ENCODE measurements at regions of chr20 and their contacts with region 1.

Region 1: DNA sequence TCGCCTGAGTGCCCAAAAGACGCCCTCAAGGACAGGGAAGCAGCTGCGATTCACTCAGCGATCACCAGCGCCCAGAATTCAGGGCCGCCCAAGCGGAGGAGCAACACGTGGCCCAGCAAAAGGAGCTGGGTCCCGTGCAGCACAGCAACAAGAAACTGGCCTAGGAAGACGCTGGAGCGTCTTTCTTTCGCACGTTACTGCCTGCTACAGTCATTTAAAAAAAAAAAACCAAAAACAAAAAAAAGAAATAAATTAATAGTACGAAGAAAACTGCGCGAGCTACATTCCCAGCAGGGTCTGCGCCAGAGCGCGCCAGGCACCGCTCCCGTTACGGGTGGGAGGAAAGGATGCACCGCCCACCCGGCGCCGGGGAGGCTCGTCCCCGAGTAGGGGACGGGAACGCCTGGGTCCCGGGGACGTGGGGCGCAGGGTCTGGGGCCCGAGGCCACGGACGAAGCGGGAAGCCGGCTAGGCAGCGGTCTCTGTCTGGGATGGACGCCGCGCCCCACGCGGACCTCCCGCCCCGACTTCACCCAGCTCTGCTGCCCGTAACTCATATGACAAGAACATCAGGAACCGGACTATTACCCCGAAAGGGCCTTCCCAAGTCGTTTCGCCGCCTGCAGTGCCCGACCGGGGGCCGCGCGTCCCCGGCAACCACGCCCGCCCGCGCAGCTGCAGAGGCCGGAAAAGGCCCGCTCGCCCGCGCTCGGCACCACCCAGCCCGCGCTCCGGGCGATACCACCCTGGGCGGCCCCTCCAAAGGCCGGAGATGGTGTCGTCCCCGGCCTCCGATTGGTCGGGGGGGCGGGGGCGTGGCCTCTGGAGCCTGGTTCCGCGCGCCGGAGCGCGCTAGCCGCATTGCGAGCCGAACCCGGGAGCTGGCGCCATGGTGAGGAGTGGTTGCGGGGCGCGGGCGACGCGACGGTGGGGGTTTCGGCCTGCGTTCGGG is at the start of gene NOP56:
- DNase-seq: peak; percentile 91 to 98 (median 95)
- ATAC-seq: peak; percentile 92
- H3K4me3 ChIP-seq: peak within 1 kb of the TSS; percentile 52 to 85
- H3K4me3 Mint-ChIP-seq: peak within 1 kb of the TSS; percentile 88
- H3K27ac ChIP-seq: peak within 1 kb of the TSS; percentile 77 to 86
- H3K27ac Mint-ChIP-seq: peak within 1 kb of the TSS; percentile 87
- H3K4me1 ChIP-seq: peaks cover 20% of the 10 kb centered on the region
- H3K4me1 Mint-ChIP-seq: peaks cover 44% of the 10 kb centered on the region
- H3K27me3 ChIP-seq: no peaks in the 10 kb centered on the region
- H3K27me3 Mint-ChIP-seq: no peaks in the 10 kb centered on the region
- CTCF ChIP-seq: no peak
- total RNA-seq, gene NOP56: 311 to 317 TPM

Region 2: GRCh38 chr20:844473-845225 is 1807.4 kb before region 1 on chr20:
- CTCF ChIA-PET with region 1: no interaction called
- POLR2A ChIA-PET with region 1: no interaction called
- intact Hi-C with region 1: loop called in 1 of 2 experiments (anchors 10 kb)
- DNase-seq: peak; percentile 81 to 97 (median 90)
- ATAC-seq: peak; percentile 94
- H3K4me3 ChIP-seq: peak overlapping the region; percentile 65 to 71
- H3K4me3 Mint-ChIP-seq: peak overlapping the region; percentile 94
- H3K27ac ChIP-seq: peak overlapping the region; percentile 26 to 48
- H3K27ac Mint-ChIP-seq: peak overlapping the region; percentile 84
- H3K4me1 ChIP-seq: peaks cover 52% of the 10 kb centered on the region
- H3K4me1 Mint-ChIP-seq: peaks cover 54% of the 10 kb centered on the region
- H3K27me3 ChIP-seq: no peaks in the 10 kb centered on the region
- H3K27me3 Mint-ChIP-seq: no peaks in the 10 kb centered on the region
- CTCF ChIP-seq: no peak

Region 3: GRCh38 chr20:2010533-2010932 is 641.5 kb before region 1 on chr20:
- CTCF ChIA-PET with region 1: no interaction called
- POLR2A ChIA-PET with region 1: no interaction called
- intact Hi-C with region 1: no loop called
- DNase-seq: no peak
- ATAC-seq: no peak
- H3K4me3 ChIP-seq: no peak overlapping the region
- H3K4me3 Mint-ChIP-seq: no peak overlapping the region
- H3K27ac ChIP-seq: no peak overlapping the region
- H3K27ac Mint-ChIP-seq: no peak overlapping the region
- H3K4me1 ChIP-seq: no peaks in the 10 kb centered on the region
- H3K4me1 Mint-ChIP-seq: no peaks in the 10 kb centered on the region
- H3K27me3 ChIP-seq: peaks cover 4% of the 10 kb centered on the region in 2 experiments
- H3K27me3 Mint-ChIP-seq: peaks cover 43% of the 10 kb centered on the region
- CTCF ChIP-seq: no peak

Region 4: GRCh38 chr20:2508631-2509467 is 143.2 kb before region 1 on chr20 and contains the start of gene ZNF343:
- CTCF ChIA-PET with region 1: no interaction called
- POLR2A ChIA-PET with region 1: interaction called, 3 read pairs
- intact Hi-C with region 1: loop called (anchors 1 to 5 kb)
- DNase-seq: peak; percentile 52 to 89 (median 75)
- ATAC-seq: peak; percentile 93
- H3K4me3 ChIP-seq: peak within 1 kb of the TSS; percentile 85 to 95
- H3K4me3 Mint-ChIP-seq: peak within 1 kb of the TSS; percentile 96
- H3K27ac ChIP-seq: peak within 1 kb of the TSS; percentile 30 to 80
- H3K27ac Mint-ChIP-seq: peak within 1 kb of the TSS; percentile 94
- H3K4me1 ChIP-seq: peaks cover 13% of the 10 kb centered on the region
- H3K4me1 Mint-ChIP-seq: peaks cover 29% of the 10 kb centered on the region
- H3K27me3 ChIP-seq: no peaks in the 10 kb centered on the region
- H3K27me3 Mint-ChIP-seq: peaks cover 8% of the 10 kb centered on the region
- CTCF ChIP-seq: no peak
- total RNA-seq, gene ZNF343: 3.9 to 4.9 TPM

Region 5: GRCh38 chr20:2663887-2664719 is 12.1 kb after region 1 on chr20 and contains the start of gene IDH3B:
- CTCF ChIA-PET with region 1: interaction called, 8 read pairs
- POLR2A ChIA-PET with region 1: interaction called, 68 read pairs
- intact Hi-C with region 1: loop called (anchors 1 kb)
- DNase-seq: peak; percentile 80 to 95 (median 93)
- ATAC-seq: peak; percentile 98
- H3K4me3 ChIP-seq: peak within 1 kb of the TSS; percentile 74 to 83
- H3K4me3 Mint-ChIP-seq: peak within 1 kb of the TSS; percentile 94
- H3K27ac ChIP-seq: peak within 1 kb of the TSS; percentile 82 to 95
- H3K27ac Mint-ChIP-seq: peak within 1 kb of the TSS; percentile 97
- H3K4me1 ChIP-seq: peaks cover 12% of the 10 kb centered on the region
- H3K4me1 Mint-ChIP-seq: peaks cover 20% of the 10 kb centered on the region
- H3K27me3 ChIP-seq: no peaks in the 10 kb centered on the region
- H3K27me3 Mint-ChIP-seq: peaks cover 7% of the 10 kb centered on the region
- CTCF ChIP-seq: no peak
- total RNA-seq, gene IDH3B: 174 to 184 TPM

Region 6: GRCh38 chr20:3045816-3046676 is 394.0 kb after region 1 on chr20 and contains the start of gene MRPS26:
- CTCF ChIA-PET with region 1: no interaction called
- POLR2A ChIA-PET with region 1: no interaction called
- intact Hi-C with region 1: loop called in 1 of 2 experiments (anchors 10 kb)
- DNase-seq: peak; percentile 48 to 87 (median 76)
- ATAC-seq: peak; percentile 85
- H3K4me3 ChIP-seq: peak within 1 kb of the TSS; percentile 72 to 95
- H3K4me3 Mint-ChIP-seq: peak within 1 kb of the TSS; percentile 82
- H3K27ac ChIP-seq: peak within 1 kb of the TSS; percentile 66 to 71
- H3K27ac Mint-ChIP-seq: peak within 1 kb of the TSS; percentile 76
- H3K4me1 ChIP-seq: peaks cover 15% of the 10 kb centered on the region
- H3K4me1 Mint-ChIP-seq: peaks cover 19% of the 10 kb centered on the region
- H3K27me3 ChIP-seq: no peaks in the 10 kb centered on the region
- H3K27me3 Mint-ChIP-seq: no peaks in the 10 kb centered on the region
- CTCF ChIP-seq: no peak
- total RNA-seq, gene MRPS26: 16.5 to 19.5 TPM

Region 7: DNA sequence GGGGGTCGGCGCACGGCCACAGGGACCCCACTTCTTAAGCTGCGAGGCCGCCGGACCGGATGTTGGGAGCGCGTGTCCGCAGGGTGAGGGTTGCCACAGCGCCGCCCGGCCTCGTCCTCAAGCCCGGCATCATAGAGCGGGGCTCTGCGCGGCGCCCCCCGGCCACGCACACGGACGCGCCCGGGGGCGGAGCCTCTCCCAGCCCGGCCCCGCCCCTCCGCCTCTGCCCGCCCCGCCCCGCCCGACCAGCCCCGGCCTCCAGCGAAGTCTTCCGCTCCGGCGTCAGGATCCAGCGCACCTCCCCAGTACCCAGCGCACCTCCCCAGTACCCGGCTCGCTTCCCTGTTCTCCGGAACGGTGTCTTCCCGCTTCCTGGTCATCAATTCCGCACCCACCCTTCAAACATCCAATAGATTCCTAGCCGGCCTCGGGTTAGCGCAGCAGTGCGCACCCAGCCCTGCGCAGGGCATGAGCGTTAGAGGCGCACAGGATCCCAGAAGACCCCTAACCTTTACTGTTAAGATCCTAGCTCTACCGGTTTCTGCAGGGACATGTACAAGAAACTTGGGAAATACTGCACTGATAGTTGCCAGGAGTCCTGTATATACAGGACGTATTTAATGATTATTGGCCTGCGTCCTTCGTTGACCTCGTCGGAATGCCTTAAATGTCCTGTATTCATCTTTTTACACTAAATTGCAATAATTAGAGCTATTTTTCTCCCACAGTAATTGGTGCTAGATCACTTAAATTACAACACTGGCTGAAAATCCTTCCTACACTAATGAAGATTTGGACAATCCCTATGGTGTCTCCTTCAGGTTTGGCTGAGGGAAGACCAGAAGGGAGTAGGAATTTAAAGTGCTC is 756.0 kb after region 1 on chr20:
- CTCF ChIA-PET with region 1: no interaction called
- POLR2A ChIA-PET with region 1: interaction called, 3 read pairs
- intact Hi-C with region 1: loop called in 1 of 2 experiments (anchors 5 kb)
- DNase-seq: peak; percentile 40 to 87 (median 69)
- ATAC-seq: peak; percentile 67
- H3K4me3 ChIP-seq: peak overlapping the region; percentile 74 to 86
- H3K4me3 Mint-ChIP-seq: peak overlapping the region; percentile 99
- H3K27ac ChIP-seq: peak overlapping the region; percentile 53 to 59
- H3K27ac Mint-ChIP-seq: peak overlapping the region; percentile 94
- H3K4me1 ChIP-seq: peaks cover 6% of the 10 kb centered on the region
- H3K4me1 Mint-ChIP-seq: peaks cover 25% of the 10 kb centered on the region
- H3K27me3 ChIP-seq: peaks cover 0 to 1% of the 10 kb centered on the region in 2 experiments
- H3K27me3 Mint-ChIP-seq: no peaks in the 10 kb centered on the region
- CTCF ChIP-seq: no peak

Region 8: DNA sequence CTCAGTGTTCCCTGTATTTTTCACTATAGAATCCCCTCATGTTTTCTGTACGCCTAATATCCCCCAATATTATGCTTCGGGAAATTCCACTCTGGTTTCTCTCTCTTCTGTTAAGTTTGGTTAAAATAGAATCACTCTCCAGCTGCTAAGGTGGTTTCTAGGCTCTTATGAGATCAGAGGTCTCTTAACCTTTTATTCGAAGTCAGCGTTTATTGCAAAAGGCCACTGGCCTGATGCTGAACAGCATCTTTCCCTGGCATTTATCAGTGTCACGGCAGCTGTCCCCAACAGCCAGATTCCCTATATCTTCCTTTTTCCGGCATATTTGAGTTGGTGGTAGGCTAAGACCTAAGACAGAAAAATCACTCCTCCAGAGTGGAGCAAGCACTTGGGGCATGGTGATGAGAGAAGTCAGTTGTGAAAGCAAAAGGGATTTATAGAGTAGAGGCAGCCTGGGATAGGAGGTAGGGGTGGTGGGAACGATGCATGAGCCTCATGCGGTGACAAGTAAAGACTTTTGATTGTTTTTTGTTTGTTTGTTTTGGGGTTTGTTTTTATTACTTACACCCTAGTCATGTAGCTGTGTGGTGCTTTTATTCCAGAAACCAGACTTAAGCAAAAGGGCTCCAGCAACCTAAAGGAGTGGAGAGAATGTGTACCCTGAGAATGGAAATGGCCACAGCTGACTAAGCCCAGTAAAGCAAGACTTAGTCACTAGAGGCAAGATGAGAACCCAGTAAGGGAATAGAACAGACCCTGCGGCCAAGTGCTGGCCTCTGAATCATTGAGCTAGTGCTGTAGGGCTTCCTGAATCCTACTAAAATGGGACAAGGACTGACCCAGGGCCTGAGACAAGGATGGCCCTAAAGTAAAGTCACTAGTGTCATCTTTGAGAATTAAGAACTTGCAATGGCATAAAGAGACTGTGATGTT is 1836.6 kb after region 1 on chr20:
- CTCF ChIA-PET with region 1: no interaction called
- POLR2A ChIA-PET with region 1: no interaction called
- intact Hi-C with region 1: no loop called
- DNase-seq: no peak
- ATAC-seq: no peak
- H3K4me3 ChIP-seq: no peak overlapping the region
- H3K4me3 Mint-ChIP-seq: no peak overlapping the region
- H3K27ac ChIP-seq: no peak overlapping the region
- H3K27ac Mint-ChIP-seq: no peak overlapping the region
- H3K4me1 ChIP-seq: no peaks in the 10 kb centered on the region
- H3K4me1 Mint-ChIP-seq: no peaks in the 10 kb centered on the region
- H3K27me3 ChIP-seq: no peaks in the 10 kb centered on the region
- H3K27me3 Mint-ChIP-seq: peaks cover 10% of the 10 kb centered on the region
- CTCF ChIP-seq: no peak